Activated T-helper 1 cell treated with anti-CD3 and anti-CD28 coated beads, Interleukin-12 subunit alpha, Interleukin-12 subunit beta, Interleukin-2, Interleukin-4 antibody, amounts not matched to agents 30 ng/mL and 10 ng/mL and 1 ng/mL, durations not matched to agents 14 hours and 24 hours and 36 hours (primary cell): ENCODE measurements at regions of chr4 and their contacts with region 1.

Region 1: GRCh38 chr4:89294573-89295269 is 12.9 kb downstream of the GPRIN3 start:
- DNase-seq: no peak
- H3K4me3 Mint-ChIP-seq: peak overlapping the region; percentile 77
- H3K27ac Mint-ChIP-seq: peak overlapping the region; percentile 99
- H3K4me1 Mint-ChIP-seq: peaks cover 89% of the 10 kb centered on the region
- H3K27me3 Mint-ChIP-seq: no peaks in the 10 kb centered on the region

Region 2: GRCh38 chr4:88284439-88285234 is 1010.1 kb before region 1 on chr4 and contains the start of gene PPM1K:
- intact Hi-C with region 1: loop called (anchors 5 kb)
- DNase-seq: peak; percentile 99
- H3K4me3 Mint-ChIP-seq: peak within 1 kb of the TSS; percentile 99
- H3K27ac Mint-ChIP-seq: peak within 1 kb of the TSS; percentile 99
- H3K4me1 Mint-ChIP-seq: peaks cover 47% of the 10 kb centered on the region
- H3K27me3 Mint-ChIP-seq: no peaks in the 10 kb centered on the region
- total RNA-seq, gene PPM1K: 37.3 and 39.5 TPM in 2 replicates

Region 3: GRCh38 chr4:88803600-88804096 is 491.1 kb before region 1 on chr4:
- intact Hi-C with region 1: loop called (anchors 2 kb)
- DNase-seq: peak; percentile 17
- H3K4me3 Mint-ChIP-seq: no peak overlapping the region
- H3K27ac Mint-ChIP-seq: no peak overlapping the region
- H3K4me1 Mint-ChIP-seq: peaks cover 13% of the 10 kb centered on the region
- H3K27me3 Mint-ChIP-seq: peaks cover 16% of the 10 kb centered on the region

Region 4: GRCh38 chr4:89204624-89205023 is 90.1 kb before region 1 on chr4:
- intact Hi-C with region 1: no loop called
- DNase-seq: no peak
- H3K4me3 Mint-ChIP-seq: no peak overlapping the region
- H3K27ac Mint-ChIP-seq: no peak overlapping the region
- H3K4me1 Mint-ChIP-seq: no peaks in the 10 kb centered on the region
- H3K27me3 Mint-ChIP-seq: peaks cover 5% of the 10 kb centered on the region

Region 5: DNA sequence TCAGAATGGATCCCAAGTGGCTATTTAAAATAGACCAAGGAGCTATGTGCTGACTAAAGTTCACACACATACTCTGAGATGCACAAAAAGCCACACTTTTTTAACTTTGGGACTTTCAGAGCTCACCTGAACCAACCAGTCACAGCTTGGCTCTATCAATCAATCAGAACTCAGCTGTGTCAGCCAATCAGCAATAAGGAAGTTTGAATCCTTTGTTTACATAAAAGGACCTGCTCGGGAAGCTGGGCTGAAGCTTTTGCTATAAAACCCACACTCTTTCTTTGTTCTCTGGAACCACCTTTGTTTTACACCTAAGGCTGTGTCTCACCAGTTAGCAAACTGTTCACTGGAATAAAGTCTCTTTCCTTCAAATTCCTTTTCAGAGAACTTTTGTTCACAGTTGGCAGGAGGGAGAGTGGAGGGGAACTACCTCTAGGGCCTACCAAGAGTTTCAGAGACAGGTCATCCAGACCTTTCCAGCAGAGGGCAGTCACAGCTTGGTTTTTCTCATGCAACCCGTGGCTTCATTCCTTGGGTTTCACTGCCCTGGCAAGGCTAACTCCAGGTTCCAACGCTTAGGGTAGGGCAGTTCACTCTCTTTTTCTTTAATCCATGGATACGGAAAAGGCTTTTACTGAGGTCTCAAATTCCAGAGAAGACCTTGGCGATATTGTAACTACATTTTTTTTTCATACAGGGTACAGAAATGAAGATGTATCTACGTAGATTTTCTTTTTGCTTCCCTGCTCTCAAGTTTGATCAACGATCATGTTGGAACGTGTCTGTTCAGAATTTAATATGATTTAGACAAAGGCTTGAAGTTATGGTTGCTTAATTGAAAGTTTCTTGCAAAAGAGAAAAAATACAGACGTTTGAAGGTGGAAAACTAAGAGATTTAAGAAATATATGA is 67.8 kb before region 1 on chr4:
- intact Hi-C with region 1: loop called (anchors 2 kb)
- DNase-seq: peak; percentile 62
- H3K4me3 Mint-ChIP-seq: peak overlapping the region; percentile 28
- H3K27ac Mint-ChIP-seq: no peak overlapping the region
- H3K4me1 Mint-ChIP-seq: peaks cover 11% of the 10 kb centered on the region
- H3K27me3 Mint-ChIP-seq: no peaks in the 10 kb centered on the region

Region 6: DNA sequence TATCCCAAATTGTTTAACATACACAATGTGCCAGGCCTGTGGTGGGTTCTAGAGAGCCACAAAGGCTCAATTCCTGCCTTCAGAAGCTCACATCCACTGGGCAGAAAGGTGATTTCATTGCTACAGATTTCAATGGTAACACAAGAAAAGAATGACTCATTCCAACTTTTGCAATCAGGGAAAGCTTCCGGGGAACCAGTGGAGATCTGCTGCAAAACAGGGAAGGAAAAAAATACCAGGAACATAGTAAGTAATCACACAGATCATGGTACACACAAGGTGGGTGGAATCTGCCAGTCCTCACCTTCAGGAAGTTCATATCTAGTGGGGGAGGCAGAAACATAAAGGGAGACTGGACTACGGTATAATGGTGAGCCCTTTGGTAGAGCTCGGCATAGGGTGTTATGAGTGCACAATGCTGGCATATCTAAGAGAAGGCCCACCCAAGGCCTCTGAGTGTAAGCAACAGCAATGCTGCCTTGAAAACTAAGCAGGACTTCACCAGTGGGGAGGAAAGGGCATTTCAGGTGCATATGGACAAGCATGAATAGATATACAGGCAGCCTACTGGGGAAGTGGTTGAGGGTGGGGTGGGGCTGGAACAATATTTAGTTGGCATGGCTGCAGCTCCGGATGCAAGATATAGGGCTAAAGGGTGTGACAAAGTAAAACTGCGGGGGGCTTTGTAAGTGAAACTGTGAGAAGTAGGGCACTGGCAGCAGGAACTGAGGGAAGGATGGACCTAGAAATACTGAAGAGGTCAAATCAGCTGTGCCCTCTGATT is 11.3 kb before region 1 on chr4:
- intact Hi-C with region 1: loop called (anchors 1 kb)
- DNase-seq: no peak
- H3K4me3 Mint-ChIP-seq: peak overlapping the region; percentile 34
- H3K27ac Mint-ChIP-seq: peak overlapping the region; percentile 83
- H3K4me1 Mint-ChIP-seq: peaks cover 71% of the 10 kb centered on the region
- H3K27me3 Mint-ChIP-seq: no peaks in the 10 kb centered on the region

Region 7: DNA sequence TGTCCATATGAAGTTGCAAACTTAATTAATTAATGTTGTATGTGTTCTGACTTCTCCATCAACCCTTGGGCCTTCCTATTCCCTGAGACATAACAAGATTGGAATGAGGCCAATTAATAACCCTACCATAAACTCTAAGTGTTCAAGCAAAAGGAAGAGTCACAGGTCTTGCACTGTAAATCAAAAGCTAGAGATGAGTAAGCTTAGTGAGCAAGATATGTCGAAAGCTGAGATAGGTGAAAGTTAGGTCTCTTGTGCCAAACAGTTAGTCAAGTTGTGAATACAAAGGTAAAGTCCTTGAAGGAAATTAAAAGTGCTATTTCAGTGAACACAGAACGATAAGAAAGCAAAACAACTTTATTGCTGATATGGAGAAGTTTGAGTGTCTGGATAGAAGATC is 71.1 kb after region 1 on chr4:
- intact Hi-C with region 1: loop called (anchors 2 kb)
- DNase-seq: no peak
- H3K4me3 Mint-ChIP-seq: no peak overlapping the region
- H3K27ac Mint-ChIP-seq: peak overlapping the region; percentile 1
- H3K4me1 Mint-ChIP-seq: peaks cover 8% of the 10 kb centered on the region
- H3K27me3 Mint-ChIP-seq: peaks cover 5% of the 10 kb centered on the region

Region 8: DNA sequence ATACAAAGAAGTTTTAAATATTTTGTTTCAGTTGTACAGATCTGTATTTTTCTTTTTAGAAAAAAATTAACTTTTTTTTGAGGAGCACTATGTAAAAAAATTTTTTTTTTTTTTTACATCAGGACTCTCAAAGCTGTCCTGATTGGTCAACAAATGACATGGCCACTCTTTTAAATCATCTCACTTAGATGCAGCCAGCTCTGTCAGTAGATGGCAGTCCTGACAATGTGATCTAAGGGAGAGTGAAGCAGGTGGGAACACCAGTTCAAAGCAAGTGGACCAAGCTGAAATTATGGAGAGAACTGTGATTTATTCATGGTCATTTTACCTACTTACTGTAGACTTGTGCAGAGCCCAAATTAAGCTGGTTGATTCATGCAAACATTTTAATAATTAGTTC is 187.5 kb after region 1 on chr4:
- intact Hi-C with region 1: no loop called
- DNase-seq: no peak
- H3K4me3 Mint-ChIP-seq: no peak overlapping the region
- H3K27ac Mint-ChIP-seq: no peak overlapping the region
- H3K4me1 Mint-ChIP-seq: no peaks in the 10 kb centered on the region
- H3K27me3 Mint-ChIP-seq: peaks cover 8% of the 10 kb centered on the region